Lower leg skin (tissue), 4 donors: ENCODE measurements at regions of chr14 and their contacts with region 1.

Region 1: DNA sequence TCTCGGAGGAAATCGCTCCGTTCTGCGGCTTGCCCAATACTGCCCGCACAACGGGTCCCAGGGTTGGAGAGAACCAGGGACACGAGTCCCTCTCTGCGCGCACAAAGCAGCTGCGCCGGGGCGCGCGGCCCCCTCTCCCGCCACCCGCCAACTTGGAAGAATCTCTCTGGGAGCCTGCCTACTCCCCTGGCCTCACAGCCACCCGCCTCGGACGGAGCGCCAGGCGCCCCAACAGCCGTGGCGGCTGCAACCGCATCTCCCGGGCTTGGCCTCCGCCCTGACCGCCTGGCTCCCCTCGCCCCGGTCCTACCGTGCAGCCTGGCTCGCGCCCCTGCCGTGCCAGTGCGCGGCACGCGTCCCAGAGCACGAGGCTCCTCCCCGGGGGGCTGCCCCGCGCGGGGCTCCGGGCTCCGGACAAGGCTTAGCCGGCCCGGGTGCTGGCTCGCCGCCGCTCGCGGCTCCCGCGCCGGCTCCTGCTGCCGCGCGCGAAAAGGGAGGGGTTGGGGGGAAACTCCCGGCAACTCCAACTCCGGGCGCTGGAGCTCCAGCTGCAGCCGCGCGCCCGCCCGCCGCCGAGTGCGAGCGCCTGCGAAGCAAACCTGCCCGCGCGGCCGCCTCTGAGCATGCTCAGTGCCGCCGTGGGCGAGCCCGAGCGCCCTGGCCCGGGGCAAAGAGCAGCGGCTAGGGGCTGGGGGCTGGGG is at the start of gene STXBP6:
- DNase-seq: peak; percentile 51 to 93
- H3K4me3 ChIP-seq: peak within 1 kb of the TSS; percentile 68
- CTCF ChIP-seq: no peak
- POLR2A ChIP-seq: no peak
- total RNA-seq, gene STXBP6: 24.6 to 49.3 (median 36.9) TPM

Region 2: DNA sequence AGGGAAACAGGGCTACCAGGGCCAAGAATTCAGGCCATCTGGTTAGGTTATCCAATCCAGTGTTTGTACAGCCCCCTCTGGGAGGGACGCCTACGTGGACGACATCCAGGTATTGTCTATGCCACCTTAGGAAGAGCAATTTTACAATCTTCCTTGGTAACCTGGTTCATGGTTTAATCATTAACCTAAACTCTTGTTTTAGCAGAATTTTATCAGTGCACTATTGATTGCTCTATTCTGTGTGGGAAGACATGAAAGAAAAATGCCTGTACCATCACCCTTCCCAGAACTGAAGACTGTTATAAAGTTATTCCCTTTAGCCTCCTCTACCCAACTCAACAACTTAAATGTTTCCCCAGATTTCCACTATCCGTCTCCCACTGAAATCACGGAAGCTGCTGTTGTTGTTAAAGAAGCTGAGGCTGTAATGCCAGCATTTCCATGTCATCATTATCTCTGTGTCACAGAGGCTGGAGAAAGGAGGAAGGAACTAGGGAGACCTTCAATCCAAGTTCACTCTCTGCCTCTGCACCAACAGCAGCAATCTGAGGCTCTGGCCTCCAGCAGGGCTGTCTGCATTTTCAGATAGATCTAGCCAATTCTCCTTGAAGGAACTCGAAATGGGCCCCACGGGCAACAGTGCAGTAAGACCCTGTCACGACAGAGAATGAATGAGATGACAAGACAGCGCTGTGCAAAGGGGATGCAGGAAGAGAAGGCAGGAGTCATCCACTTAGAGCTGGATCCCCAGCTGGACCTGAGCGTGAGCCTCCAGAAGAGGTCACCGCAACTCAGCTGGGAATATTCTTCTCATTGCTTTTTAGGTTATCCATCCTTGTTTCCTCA is 232.3 kb before region 1 on chr14:
- intact Hi-C with region 1: loop called (anchors 10 kb)
- DNase-seq: no peak
- H3K4me3 ChIP-seq: no peak overlapping the region
- CTCF ChIP-seq: no peak
- POLR2A ChIP-seq: no peak

Region 3: DNA sequence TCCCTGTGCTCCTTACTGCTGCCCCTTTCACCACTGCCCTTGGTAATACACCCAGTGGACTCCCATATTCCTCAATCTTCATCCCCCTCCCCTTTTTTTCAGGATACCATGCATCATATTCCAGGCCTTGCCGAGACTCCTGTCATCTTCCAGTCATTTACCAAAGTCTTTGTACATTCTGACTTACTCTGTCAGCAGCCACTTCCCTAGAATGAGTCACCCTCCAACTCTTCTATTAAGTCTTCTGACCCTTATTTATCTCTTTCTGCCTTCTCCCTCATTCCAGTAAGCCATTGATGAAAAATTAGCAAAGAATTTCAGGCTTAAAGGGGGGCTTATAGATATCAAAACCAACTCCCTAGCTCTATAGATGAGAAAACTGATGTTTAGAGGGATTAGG is 127.8 kb before region 1 on chr14:
- intact Hi-C with region 1: no loop called
- DNase-seq: no peak
- H3K4me3 ChIP-seq: no peak overlapping the region
- CTCF ChIP-seq: no peak
- POLR2A ChIP-seq: no peak

Region 4: GRCh38 chr14:25095736-25096437 is 46.2 kb after region 1 on chr14:
- intact Hi-C with region 1: no loop called
- DNase-seq: no peak
- H3K4me3 ChIP-seq: no peak overlapping the region
- CTCF ChIP-seq: no peak
- POLR2A ChIP-seq: no peak

Region 5: DNA sequence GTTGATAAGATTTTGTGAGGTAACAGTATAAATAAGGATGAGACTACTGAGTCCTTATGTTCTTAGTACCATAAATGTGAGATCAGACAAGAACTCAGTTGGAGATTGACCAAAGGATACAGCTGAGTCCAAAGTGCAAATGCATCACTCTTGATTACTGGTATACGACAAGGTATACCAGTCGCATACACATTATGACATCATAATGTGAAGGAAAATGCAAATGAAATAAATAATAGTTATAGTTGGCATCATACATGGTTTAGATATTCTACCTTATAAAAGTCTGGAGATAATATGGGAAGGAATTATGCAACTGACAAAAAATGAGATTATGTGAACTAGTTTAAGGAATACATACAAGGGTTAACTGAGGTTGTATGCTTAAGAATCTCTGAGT is 476.6 kb after region 1 on chr14:
- intact Hi-C with region 1: no loop called
- DNase-seq: no peak
- H3K4me3 ChIP-seq: no peak overlapping the region
- CTCF ChIP-seq: no peak
- POLR2A ChIP-seq: no peak

Region 6: GRCh38 chr14:25788252-25788651 is 738.5 kb after region 1 on chr14:
- intact Hi-C with region 1: no loop called
- DNase-seq: no peak
- H3K4me3 ChIP-seq: no peak overlapping the region
- CTCF ChIP-seq: no peak
- POLR2A ChIP-seq: no peak